ENCODE measurements at regions of chr2 and their contacts with region 1.

Region 1: GRCh38 chr2:215435809-215436704 is at the start of gene FN1:
- DNase-seq: peak; percentile 96
- H3K4me3 ChIP-seq: peak within 1 kb of the TSS; percentile 88
- H3K27ac ChIP-seq: peak within 1 kb of the TSS; percentile 96
- H3K4me1 ChIP-seq: peaks cover 28% of the 10 kb centered on the region
- H3K27me3 ChIP-seq: no peaks in the 10 kb centered on the region
- CTCF ChIP-seq: no peak
- total RNA-seq, gene FN1: 1,570 and 2,058 TPM in 2 replicates

Region 2: GRCh38 chr2:215189393-215189792 is 246.7 kb before region 1 on chr2:
- CTCF ChIA-PET with region 1: no interaction called
- POLR2A ChIA-PET with region 1: no interaction called
- intact Hi-C with region 1: no loop called
- DNase-seq: no peak
- H3K4me3 ChIP-seq: no peak overlapping the region
- H3K27ac ChIP-seq: no peak overlapping the region
- H3K4me1 ChIP-seq: no peaks in the 10 kb centered on the region
- H3K27me3 ChIP-seq: no peaks in the 10 kb centered on the region
- CTCF ChIP-seq: no peak

Region 3: GRCh38 chr2:215466097-215466909 is 30.2 kb after region 1 on chr2:
- CTCF ChIA-PET with region 1: no interaction called
- POLR2A ChIA-PET with region 1: interaction called, 19 read pairs
- intact Hi-C with region 1: no loop called
- DNase-seq: peak; percentile 29
- H3K4me3 ChIP-seq: no peak overlapping the region
- H3K27ac ChIP-seq: no peak overlapping the region
- H3K4me1 ChIP-seq: peaks cover 11% of the 10 kb centered on the region
- H3K27me3 ChIP-seq: no peaks in the 10 kb centered on the region
- CTCF ChIP-seq: no peak

Region 4: DNA sequence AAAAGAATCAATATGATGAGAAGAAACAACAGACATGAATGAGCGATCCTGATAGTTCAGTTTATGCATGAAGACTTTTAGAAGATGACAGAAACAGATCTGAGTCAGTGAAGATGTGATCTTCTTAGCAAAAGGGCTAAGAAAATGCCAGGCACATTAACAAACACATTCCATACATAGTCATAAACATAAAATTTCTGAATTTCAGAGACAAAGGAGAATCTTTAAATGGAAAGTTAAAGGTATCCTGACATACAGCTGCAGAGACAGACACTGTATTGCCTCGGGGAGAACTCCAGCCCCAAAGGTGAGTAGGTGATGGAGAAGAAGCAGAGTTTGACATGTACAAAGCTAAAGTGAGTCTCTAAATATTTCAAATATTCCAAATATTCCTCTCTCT is 40.4 kb after region 1 on chr2:
- CTCF ChIA-PET with region 1: no interaction called
- POLR2A ChIA-PET with region 1: no interaction called
- intact Hi-C with region 1: no loop called
- DNase-seq: no peak
- H3K4me3 ChIP-seq: no peak overlapping the region
- H3K27ac ChIP-seq: no peak overlapping the region
- H3K4me1 ChIP-seq: no peaks in the 10 kb centered on the region
- H3K27me3 ChIP-seq: no peaks in the 10 kb centered on the region
- CTCF ChIP-seq: no peak

Region 5: GRCh38 chr2:215717501-215718381 is 281.7 kb after region 1 on chr2:
- CTCF ChIA-PET with region 1: no interaction called
- POLR2A ChIA-PET with region 1: no interaction called
- intact Hi-C with region 1: no loop called
- DNase-seq: no peak
- H3K4me3 ChIP-seq: no peak overlapping the region
- H3K27ac ChIP-seq: peak overlapping the region; percentile 22
- H3K4me1 ChIP-seq: peaks cover 27% of the 10 kb centered on the region
- H3K27me3 ChIP-seq: no peaks in the 10 kb centered on the region
- CTCF ChIP-seq: no peak

Region 6: GRCh38 chr2:215746887-215747679 is 311.0 kb after region 1 on chr2:
- CTCF ChIA-PET with region 1: no interaction called
- POLR2A ChIA-PET with region 1: no interaction called
- intact Hi-C with region 1: no loop called
- DNase-seq: no peak
- H3K4me3 ChIP-seq: no peak overlapping the region
- H3K27ac ChIP-seq: no peak overlapping the region
- H3K4me1 ChIP-seq: peaks cover 14% of the 10 kb centered on the region
- H3K27me3 ChIP-seq: no peaks in the 10 kb centered on the region
- CTCF ChIP-seq: no peak

Region 7: DNA sequence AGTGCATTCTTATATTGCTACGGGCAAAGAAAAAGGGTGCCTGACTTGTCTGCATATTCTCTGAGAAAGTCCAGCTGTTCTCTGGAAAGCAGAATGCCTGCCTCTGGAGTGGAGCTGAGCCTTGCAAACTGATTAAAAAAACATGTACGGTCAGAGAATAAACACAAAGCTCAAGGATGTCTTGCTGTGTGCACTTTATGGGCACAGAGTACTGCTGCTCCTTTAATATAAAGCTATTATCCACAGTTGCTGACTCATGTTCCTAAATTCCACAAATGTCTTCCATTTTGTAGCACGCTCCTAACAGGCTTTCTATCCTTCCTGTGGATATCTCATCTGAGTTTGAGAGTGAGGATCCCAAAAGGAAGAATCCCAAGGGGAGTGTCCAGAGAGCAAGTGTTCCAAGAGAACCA is 348.3 kb after region 1 on chr2:
- CTCF ChIA-PET with region 1: no interaction called
- POLR2A ChIA-PET with region 1: no interaction called
- intact Hi-C with region 1: loop called (anchors 5 kb)
- DNase-seq: peak; percentile 95
- H3K4me3 ChIP-seq: no peak overlapping the region
- H3K27ac ChIP-seq: peak overlapping the region; percentile 88
- H3K4me1 ChIP-seq: peaks cover 74% of the 10 kb centered on the region
- H3K27me3 ChIP-seq: no peaks in the 10 kb centered on the region
- CTCF ChIP-seq: no peak

Region 8: DNA sequence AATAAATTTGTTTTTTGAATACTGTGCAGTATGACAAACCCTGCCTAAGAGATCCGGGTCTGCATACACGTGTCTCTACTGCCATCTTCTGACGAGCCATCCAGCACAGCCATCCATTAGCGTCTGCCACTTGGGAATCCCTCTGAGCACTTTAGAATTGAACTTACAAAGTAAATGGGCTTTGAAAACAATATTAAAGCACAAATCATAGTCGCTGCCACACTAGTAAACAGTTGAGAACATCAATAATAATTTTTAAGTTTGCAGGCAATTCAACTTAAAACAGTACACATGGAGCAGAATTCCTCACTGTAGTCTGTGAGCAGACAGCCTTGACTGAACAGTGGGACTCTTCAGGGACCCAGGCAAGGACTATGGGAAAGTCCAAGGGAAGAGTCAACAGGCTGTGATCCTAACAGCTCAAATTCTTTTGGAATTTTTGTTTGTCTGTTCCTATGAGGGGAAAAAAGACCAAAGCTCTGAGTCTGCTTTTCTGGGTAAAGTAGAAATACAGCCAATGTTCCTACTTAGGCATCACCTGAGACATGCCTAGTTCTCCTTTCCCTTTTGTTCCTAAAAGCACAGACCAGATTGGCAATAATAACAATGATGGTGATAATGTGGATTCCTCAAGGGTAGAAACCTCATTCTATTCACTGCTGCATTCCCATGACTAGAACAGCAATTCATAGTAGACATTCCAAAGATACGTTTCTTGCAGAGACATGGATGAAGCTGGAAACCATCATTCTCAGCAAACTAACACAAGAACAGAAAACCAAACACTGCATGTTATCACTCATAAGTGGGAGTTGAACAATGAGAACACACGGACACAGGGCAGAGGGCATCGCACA is 484.4 kb after region 1 on chr2:
- CTCF ChIA-PET with region 1: no interaction called
- POLR2A ChIA-PET with region 1: no interaction called
- intact Hi-C with region 1: loop called (anchors 1 kb)
- DNase-seq: peak; percentile 89
- H3K4me3 ChIP-seq: no peak overlapping the region
- H3K27ac ChIP-seq: peak overlapping the region; percentile 81
- H3K4me1 ChIP-seq: peaks cover 26% of the 10 kb centered on the region
- H3K27me3 ChIP-seq: no peaks in the 10 kb centered on the region
- CTCF ChIP-seq: peak; percentile 92